Heart left ventricle (tissue), 16 donors: ENCODE measurements at regions of chr4 and their contacts with region 1.

Region 1: DNA sequence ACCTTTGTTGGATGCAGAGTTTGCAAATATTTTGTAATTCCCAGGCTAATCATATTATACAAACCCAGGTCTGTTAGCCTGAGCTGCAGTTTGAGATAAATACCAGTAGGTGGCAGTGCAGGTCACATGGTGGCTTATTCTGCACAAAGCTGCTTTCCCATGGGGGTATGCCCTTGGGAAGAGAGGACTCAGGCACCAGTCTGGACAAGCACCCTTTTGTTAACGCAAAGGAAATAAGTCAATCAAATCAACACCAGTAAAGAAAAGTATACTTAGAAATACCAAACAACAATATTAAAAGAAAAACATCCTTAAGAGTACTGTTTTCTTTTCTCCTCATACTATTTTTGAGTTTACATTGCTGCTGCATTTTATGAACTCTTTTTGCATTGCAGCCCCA is 389.0 kb upstream of the ZFP42 start:
- DNase-seq: peak in 1 of 5 donors; percentile 34
- ATAC-seq: peak in 1 of 4 donors; percentile 57
- H3K4me3 ChIP-seq: no peak overlapping the region
- H3K27ac ChIP-seq: no peak overlapping the region
- H3K4me1 ChIP-seq: peaks cover 0 to 15% (median 0%) of the 10 kb centered on the region in 12 donors
- H3K27me3 ChIP-seq: peaks cover 0 to 12% (median 0%) of the 10 kb centered on the region in 9 donors
- CTCF ChIP-seq: peak; percentile 70 to 87 (median 83)
- POLR2A ChIP-seq: no peak

Region 2: DNA sequence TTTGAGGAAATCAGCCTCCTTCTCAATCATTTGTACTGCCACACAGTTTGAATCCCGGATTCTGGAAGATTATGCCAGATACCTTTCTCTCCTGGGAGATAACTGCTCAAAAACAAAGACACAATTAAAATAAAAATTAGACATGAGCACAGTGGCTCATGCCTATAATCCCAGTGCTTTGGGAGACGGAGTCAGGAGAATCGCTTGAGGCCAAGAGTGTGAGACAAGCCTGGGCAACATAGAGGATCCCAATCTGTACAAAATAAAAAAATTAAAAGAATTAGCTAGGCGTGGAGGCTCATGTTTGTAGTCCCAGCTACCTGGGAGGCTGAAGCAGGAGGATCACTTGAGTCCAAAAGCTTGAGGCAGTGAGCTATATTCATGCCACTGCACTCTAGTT is 12.7 kb after region 1 on chr4:
- intact Hi-C with region 1: loop called in 1 of 10 experiments (anchors 2 kb)
- DNase-seq: no peak
- ATAC-seq: no peak
- H3K4me3 ChIP-seq: no peak overlapping the region
- H3K27ac ChIP-seq: no peak overlapping the region
- H3K4me1 ChIP-seq: no peaks in the 10 kb centered on the region
- H3K27me3 ChIP-seq: no peaks in the 10 kb centered on the region
- CTCF ChIP-seq: no peak
- POLR2A ChIP-seq: no peak

Region 3: GRCh38 chr4:189124149-189124758 is 1517.7 kb after region 1 on chr4:
- intact Hi-C with region 1: loop called in 9 of 10 experiments (anchors 5 to 10 kb)
- DNase-seq: no peak
- ATAC-seq: no peak
- H3K4me3 ChIP-seq: no peak overlapping the region
- H3K27ac ChIP-seq: no peak overlapping the region
- H3K4me1 ChIP-seq: no peaks in the 10 kb centered on the region
- H3K27me3 ChIP-seq: no peaks in the 10 kb centered on the region
- CTCF ChIP-seq: peak; percentile 37 to 67 (median 57)
- POLR2A ChIP-seq: no peak

Region 4: GRCh38 chr4:189202182-189202868 is 1595.7 kb after region 1 on chr4:
- intact Hi-C with region 1: loop called in 5 of 10 experiments (anchors 5 to 10 kb)
- DNase-seq: peak; percentile 43 to 83 (median 56)
- ATAC-seq: peak in 3 of 4 donors; percentile 34 to 76 (median 57)
- H3K4me3 ChIP-seq: peak overlapping the region in 9 of 12 donors; percentile 1 to 45 (median 29)
- H3K27ac ChIP-seq: no peak overlapping the region
- H3K4me1 ChIP-seq: peaks cover 0 to 16% (median 0%) of the 10 kb centered on the region in 12 donors
- H3K27me3 ChIP-seq: peaks cover 0 to 23% (median 0%) of the 10 kb centered on the region in 9 donors
- CTCF ChIP-seq: peak; percentile 58 to 87 (median 76)
- POLR2A ChIP-seq: no peak